Caco-2 (cell line): ENCODE measurements at regions of chr5 and their contacts with region 1.

Region 1: GRCh38 chr5:67301285-67301903 is 104.8 kb upstream of the CD180 start:
- DNase-seq: no peak
- H3K4me3 ChIP-seq: no peak overlapping the region
- H3K4me3 Mint-ChIP-seq: no peak overlapping the region
- H3K27ac Mint-ChIP-seq: no peak overlapping the region
- H3K4me1 ChIP-seq: no peaks in the 10 kb centered on the region
- H3K4me1 Mint-ChIP-seq: peaks cover 7% of the 10 kb centered on the region
- H3K27me3 ChIP-seq: no peaks in the 10 kb centered on the region
- H3K27me3 Mint-ChIP-seq: peaks cover 4% of the 10 kb centered on the region
- CTCF ChIP-seq: no peak

Region 2: DNA sequence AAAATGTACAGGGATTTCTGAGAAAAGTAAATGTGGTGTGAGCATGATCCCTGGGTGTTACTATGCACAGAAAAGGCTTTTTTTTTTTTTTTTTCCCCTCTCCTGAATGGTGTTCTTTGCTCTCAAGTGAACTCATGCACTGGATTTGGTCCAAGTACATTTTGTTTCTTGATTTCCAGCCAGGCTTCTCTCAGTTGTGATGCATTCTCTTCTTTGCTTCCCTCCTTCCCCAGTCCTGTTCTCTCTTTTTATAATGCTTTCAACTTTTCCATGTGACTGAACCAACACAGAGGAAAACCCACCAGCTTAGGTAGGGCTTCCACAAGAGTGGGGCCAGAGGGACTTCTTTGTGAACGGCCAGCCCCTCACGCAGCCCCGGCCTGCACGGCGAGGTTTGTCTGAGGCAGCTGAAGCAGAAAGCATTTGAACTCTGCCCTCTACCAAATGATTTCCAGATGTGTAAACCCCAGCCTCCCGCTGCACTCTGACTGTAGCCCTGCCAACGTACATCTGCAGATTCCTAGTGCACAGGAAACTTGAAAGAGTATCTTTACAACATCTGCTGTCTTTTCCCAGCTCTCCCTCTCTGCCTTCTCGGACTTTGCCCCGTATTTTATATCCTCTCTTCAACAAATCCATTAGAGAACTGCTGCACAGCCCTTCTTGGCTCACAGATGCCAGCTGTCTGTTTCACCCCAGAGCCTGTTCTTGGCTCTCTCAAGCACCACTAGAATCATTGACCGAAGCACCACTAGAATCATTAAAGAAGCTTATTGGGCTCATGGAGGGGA is 33.0 kb before region 1 on chr5:
- CTCF ChIA-PET with region 1: no interaction called
- POLR2A ChIA-PET with region 1: no interaction called
- intact Hi-C with region 1: loop called (anchors 5 kb)
- DNase-seq: peak; percentile 29 to 53
- H3K4me3 ChIP-seq: no peak overlapping the region
- H3K4me3 Mint-ChIP-seq: no peak overlapping the region
- H3K27ac Mint-ChIP-seq: no peak overlapping the region
- H3K4me1 ChIP-seq: peaks cover 33% of the 10 kb centered on the region
- H3K4me1 Mint-ChIP-seq: no peaks in the 10 kb centered on the region
- H3K27me3 ChIP-seq: no peaks in the 10 kb centered on the region
- H3K27me3 Mint-ChIP-seq: no peaks in the 10 kb centered on the region
- CTCF ChIP-seq: no peak